Activated B cell treated with CpG ODN at 0.5 μM for 24 hours (primary cell): ENCODE measurements at regions of chr21 and their contacts with region 1.

Region 1: GRCh38 chr21:25539606-25540005 is 67.7 kb downstream of the MRPL39 start:
- DNase-seq: no peak
- ATAC-seq: no peak
- H3K4me3 Mint-ChIP-seq: no peak overlapping the region
- H3K27ac Mint-ChIP-seq: no peak overlapping the region
- H3K4me1 Mint-ChIP-seq: peaks cover 2% of the 10 kb centered on the region
- H3K27me3 Mint-ChIP-seq: no peaks in the 10 kb centered on the region
- CTCF ChIP-seq: no peak

Region 2: GRCh38 chr21:25515484-25516405 is 23.9 kb before region 1 on chr21:
- CTCF ChIA-PET with region 1: no interaction called
- POLR2A ChIA-PET with region 1: no interaction called
- intact Hi-C with region 1: loop called (anchors 2 kb)
- DNase-seq: no peak
- ATAC-seq: no peak
- H3K4me3 Mint-ChIP-seq: no peak overlapping the region
- H3K27ac Mint-ChIP-seq: no peak overlapping the region
- H3K4me1 Mint-ChIP-seq: peaks cover 13% of the 10 kb centered on the region
- H3K27me3 Mint-ChIP-seq: no peaks in the 10 kb centered on the region
- CTCF ChIP-seq: no peak

Region 3: GRCh38 chr21:25578056-25578961 is 38.7 kb after region 1 on chr21:
- CTCF ChIA-PET with region 1: no interaction called
- POLR2A ChIA-PET with region 1: no interaction called
- intact Hi-C with region 1: no loop called
- DNase-seq: no peak
- ATAC-seq: peak; percentile 6
- H3K4me3 Mint-ChIP-seq: no peak overlapping the region
- H3K27ac Mint-ChIP-seq: peak overlapping the region; percentile 27
- H3K4me1 Mint-ChIP-seq: peaks cover 67% of the 10 kb centered on the region
- H3K27me3 Mint-ChIP-seq: no peaks in the 10 kb centered on the region
- CTCF ChIP-seq: no peak